Activated CD4-positive, alpha-beta memory T cell treated with anti-CD3 and anti-CD28 coated beads for 36 hours (primary cell): ENCODE measurements at regions of chr14 and their contacts with region 1.

Region 1: DNA sequence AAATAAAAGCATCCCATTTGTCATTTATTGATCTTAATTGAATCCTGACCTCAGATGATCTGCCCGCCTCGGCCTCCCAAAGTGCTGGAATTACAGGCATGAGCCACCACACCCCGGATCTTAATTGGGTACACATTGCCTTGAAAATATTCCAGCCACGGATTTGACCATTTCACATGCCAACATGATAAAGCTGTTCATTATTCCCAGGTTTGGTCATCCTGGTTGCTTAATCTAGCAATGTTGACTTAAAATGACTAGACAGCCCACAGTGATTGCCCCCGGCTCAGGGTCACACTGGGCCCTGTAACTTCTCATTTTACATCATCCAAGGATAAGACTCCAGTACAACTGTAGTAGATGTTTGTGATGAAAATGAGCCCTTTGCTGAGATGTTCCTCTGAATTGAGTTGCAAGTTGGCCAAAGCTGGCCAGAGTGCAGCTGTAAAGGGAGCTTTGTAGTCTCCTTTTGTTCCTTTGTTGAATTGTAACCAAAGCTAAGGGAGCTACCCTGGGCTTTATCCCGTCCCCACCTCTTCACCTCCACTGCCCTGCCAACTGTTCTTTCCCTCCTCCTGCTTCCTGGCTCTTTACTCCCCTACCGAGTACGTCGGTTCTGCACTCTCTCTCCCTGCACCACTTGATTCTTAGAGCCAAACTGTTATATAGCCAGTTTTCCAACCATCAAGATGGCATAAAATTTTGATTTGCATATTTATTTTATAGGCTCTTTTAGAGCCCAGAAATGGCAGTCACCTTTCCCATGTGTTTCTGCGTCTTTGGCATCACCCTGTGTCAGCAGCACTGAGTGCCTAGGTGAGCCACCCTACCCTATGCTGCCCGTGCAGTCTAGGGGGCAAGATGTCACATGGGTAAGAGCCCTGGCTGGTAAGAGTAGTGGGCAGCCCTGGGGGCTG is 141.3 kb upstream of the HIF1A start:
- DNase-seq: no peak
- H3K4me3 Mint-ChIP-seq: no peak overlapping the region
- H3K27ac Mint-ChIP-seq: peak overlapping the region; percentile 97
- H3K4me1 Mint-ChIP-seq: peaks cover 55% of the 10 kb centered on the region
- H3K27me3 Mint-ChIP-seq: no peaks in the 10 kb centered on the region

Region 2: GRCh38 chr14:60951776-60952435 is 602.1 kb before region 1 on chr14:
- CTCF ChIA-PET with region 1: no interaction called
- POLR2A ChIA-PET with region 1: no interaction called
- intact Hi-C with region 1: no loop called
- DNase-seq: no peak
- H3K4me3 Mint-ChIP-seq: no peak overlapping the region
- H3K27ac Mint-ChIP-seq: no peak overlapping the region
- H3K4me1 Mint-ChIP-seq: peaks cover 10% of the 10 kb centered on the region
- H3K27me3 Mint-ChIP-seq: no peaks in the 10 kb centered on the region

Region 3: GRCh38 chr14:61512026-61512834 is 41.8 kb before region 1 on chr14:
- CTCF ChIA-PET with region 1: no interaction called
- POLR2A ChIA-PET with region 1: interaction called, 3 read pairs
- intact Hi-C with region 1: loop called (anchors 1 kb)
- DNase-seq: no peak
- H3K4me3 Mint-ChIP-seq: peak overlapping the region; percentile 51
- H3K27ac Mint-ChIP-seq: peak overlapping the region; percentile 98
- H3K4me1 Mint-ChIP-seq: peaks cover 95% of the 10 kb centered on the region
- H3K27me3 Mint-ChIP-seq: no peaks in the 10 kb centered on the region

Region 4: GRCh38 chr14:61537563-61538463 is 16.2 kb before region 1 on chr14:
- CTCF ChIA-PET with region 1: no interaction called
- POLR2A ChIA-PET with region 1: no interaction called
- intact Hi-C with region 1: loop called (anchors 1 kb)
- DNase-seq: peak; percentile 71
- H3K4me3 Mint-ChIP-seq: peak overlapping the region; percentile 1
- H3K27ac Mint-ChIP-seq: peak overlapping the region; percentile 77
- H3K4me1 Mint-ChIP-seq: peaks cover 81% of the 10 kb centered on the region
- H3K27me3 Mint-ChIP-seq: no peaks in the 10 kb centered on the region